Activated T-helper 2 cell treated with anti-CD3 and anti-CD28 coated beads, Interferon-gamma antibody, Interleukin-2, Interleukin-4, amounts not matched to agents 10 μg/mL and 5 μg/mL and 100 μg/mL, durations not matched to agents 14 hours and 24 hours and 36 hours (primary cell): ENCODE measurements at regions of chr11 and their contacts with region 1.

Region 1: DNA sequence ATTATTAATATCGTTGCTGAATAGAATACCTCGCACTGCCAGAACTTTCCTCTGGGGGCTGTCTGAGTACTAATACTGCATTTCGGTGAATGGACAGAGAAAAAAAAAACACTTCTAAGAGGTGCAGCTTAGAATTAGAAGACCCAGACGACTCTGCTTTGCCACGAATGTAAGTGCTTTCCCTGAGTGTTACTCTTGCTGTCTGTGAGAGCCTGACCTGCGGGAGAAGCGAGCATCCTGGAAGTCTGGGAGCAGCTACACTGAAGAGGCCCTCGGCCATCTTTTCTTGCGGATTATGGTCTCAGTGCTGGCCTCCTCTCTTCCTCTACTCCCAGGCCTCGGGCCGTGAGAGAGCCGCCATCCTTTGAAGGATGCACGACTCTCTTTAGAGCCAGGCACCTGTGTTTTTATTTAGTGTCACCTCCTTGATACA is 94.9 kb downstream of the SCN3B start:
- DNase-seq: no peak
- H3K4me3 Mint-ChIP-seq: no peak overlapping the region
- H3K27ac Mint-ChIP-seq: no peak overlapping the region
- H3K4me1 Mint-ChIP-seq: peaks cover 31% of the 10 kb centered on the region
- H3K27me3 Mint-ChIP-seq: no peaks in the 10 kb centered on the region

Region 2: DNA sequence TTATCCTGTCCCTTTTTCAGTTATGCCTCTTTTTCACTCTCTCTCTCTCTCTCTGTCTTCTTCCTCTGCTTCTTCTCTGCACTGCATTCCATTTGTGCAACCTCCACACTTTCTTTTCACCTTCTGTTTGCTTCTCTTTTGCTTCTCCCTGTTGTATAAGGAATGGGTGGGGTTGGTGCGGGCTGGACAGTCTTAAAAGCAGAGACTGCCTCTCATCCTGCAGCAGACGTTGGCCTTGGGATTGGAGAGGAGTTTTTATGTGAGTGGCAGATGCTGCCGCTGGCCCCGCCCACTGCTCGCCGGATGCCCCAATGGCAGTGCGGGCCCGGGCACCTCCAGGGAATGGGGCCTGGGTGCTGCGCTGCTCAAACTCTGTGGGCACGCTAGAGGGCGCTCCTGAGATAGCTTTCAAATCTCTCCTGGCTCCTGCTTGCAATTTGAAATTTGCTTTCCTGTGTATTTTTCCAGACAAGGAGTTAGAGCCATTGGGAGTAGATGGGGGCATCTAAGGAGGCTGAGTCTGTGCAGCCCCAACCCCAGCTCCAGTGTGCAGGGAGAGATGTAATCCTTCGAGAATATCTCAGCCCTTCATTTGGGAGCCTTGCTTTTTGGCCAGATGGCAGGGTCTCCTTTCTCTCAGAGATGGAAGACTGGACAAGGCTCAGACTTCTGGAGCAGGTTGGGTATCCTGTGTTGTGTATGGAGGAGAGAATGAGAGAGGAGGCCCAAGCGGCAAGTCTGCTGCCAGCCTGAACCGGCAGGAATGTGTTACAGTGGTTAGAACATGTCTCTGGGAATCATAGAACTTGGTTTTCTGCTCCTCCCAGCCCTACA is 48.3 kb before region 1 on chr11:
- intact Hi-C with region 1: loop called (anchors 5 kb)
- DNase-seq: peak; percentile 61
- H3K4me3 Mint-ChIP-seq: no peak overlapping the region
- H3K27ac Mint-ChIP-seq: no peak overlapping the region
- H3K4me1 Mint-ChIP-seq: peaks cover 24% of the 10 kb centered on the region
- H3K27me3 Mint-ChIP-seq: no peaks in the 10 kb centered on the region